ENCODE measurements at regions of chr12 and their contacts with region 1.

Region 1: GRCh38 chr12:104286538-104287482 is 16.7 kb upstream of the EID3 start:
- DNase-seq: peak; percentile 86 to 97
- H3K4me3 ChIP-seq: peak overlapping the region; percentile 67 to 70
- H3K27ac ChIP-seq: peak overlapping the region; percentile 86
- H3K4me1 ChIP-seq: peaks cover 9 to 24% of the 10 kb centered on the region in 2 donors
- H3K27me3 ChIP-seq: no peaks in the 10 kb centered on the region
- CTCF ChIP-seq: peak in 1 of 3 experiments; percentile 6

Region 2: DNA sequence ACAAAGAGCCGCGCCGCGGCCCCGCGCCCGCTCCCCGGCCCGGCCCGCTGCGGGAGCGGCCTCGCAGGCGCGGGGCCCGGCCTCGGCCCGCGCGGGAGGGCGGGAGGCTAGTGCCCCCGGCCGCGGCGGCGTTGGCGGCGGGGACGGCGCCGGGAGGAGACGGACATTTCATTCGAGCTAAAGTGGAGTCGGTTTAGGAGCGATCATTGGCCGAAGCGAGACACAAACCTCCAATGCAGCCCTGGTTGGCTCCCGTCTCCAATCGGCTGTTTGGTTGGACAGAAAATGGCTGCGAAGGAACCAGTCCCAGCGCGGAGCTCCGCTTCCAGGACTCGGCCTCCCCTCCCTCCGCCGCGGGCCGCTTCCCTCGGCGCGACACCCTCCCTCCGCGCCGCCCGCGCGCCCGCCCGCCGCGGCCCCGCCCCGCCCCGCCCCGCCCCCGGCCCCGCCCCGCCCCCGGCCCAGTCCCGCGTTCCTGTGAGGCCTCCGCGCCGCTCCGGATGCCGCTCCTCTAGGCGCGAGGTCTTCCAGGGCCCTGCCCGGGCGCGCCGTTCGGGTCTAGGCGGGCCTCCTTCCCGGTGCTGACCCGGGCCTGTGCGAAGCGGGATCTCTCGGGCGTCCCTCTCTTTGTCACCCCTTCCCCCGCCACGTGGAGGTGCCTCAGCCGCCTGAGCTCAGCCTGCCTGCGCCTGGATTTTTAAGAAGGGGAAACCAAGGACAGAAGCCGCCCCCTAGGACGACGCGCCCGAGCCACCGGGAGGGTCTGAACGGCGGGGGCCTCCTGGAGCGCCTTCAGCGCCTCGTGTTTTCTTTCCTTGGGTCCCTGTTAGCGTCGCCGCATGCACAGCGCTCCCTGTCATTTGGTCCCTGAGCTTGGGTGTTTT is 148.7 kb before region 1 on chr12 and contains the start of gene NFYB:
- intact Hi-C with region 1: loop called (anchors 5 kb)
- DNase-seq: peak; percentile 91 to 99
- H3K4me3 ChIP-seq: peak within 1 kb of the TSS; percentile 88 to 97
- H3K27ac ChIP-seq: peak within 1 kb of the TSS; percentile 91 to 98
- H3K4me1 ChIP-seq: peaks cover 0 to 28% of the 10 kb centered on the region in 2 donors
- H3K27me3 ChIP-seq: no peaks in the 10 kb centered on the region
- CTCF ChIP-seq: no peak
- total RNA-seq, gene NFYB: 62.8 TPM

Region 3: GRCh38 chr12:104303538-104304151 is 16.8 kb after region 1 on chr12 and contains the start of gene EID3:
- intact Hi-C with region 1: loop called (anchors 1 kb)
- DNase-seq: peak; percentile 63 to 93
- H3K4me3 ChIP-seq: peak within 1 kb of the TSS; percentile 34 to 69
- H3K27ac ChIP-seq: peak within 1 kb of the TSS; percentile 77 to 85
- H3K4me1 ChIP-seq: peaks cover 28 to 65% of the 10 kb centered on the region in 2 donors
- H3K27me3 ChIP-seq: no peaks in the 10 kb centered on the region
- CTCF ChIP-seq: no peak
- total RNA-seq, gene EID3: 1.4 TPM

Region 4: GRCh38 chr12:104427011-104427461 is 140.2 kb after region 1 on chr12:
- intact Hi-C with region 1: no loop called
- DNase-seq: no peak
- H3K4me3 ChIP-seq: no peak overlapping the region
- H3K27ac ChIP-seq: no peak overlapping the region
- H3K4me1 ChIP-seq: no peaks in the 10 kb centered on the region
- H3K27me3 ChIP-seq: no peaks in the 10 kb centered on the region
- CTCF ChIP-seq: no peak

Measured in ascending aorta (tissue), 2 donors.